ENCODE measurements at regions of chr9 and their contacts with region 1.

Region 1: GRCh38 chr9:95592931-95593330 is 76.2 kb upstream of the PTCH1 start:
- DNase-seq: no peak
- H3K4me3 ChIP-seq: no peak overlapping the region
- H3K27ac ChIP-seq: no peak overlapping the region
- H3K27me3 ChIP-seq: peaks cover 26% of the 10 kb centered on the region
- CTCF ChIP-seq: no peak

Region 2: GRCh38 chr9:95206143-95206542 is 386.8 kb before region 1 on chr9:
- CTCF ChIA-PET with region 1: no interaction called
- POLR2A ChIA-PET with region 1: interaction called, 10 read pairs
- DNase-seq: no peak
- H3K4me3 ChIP-seq: no peak overlapping the region
- H3K27ac ChIP-seq: no peak overlapping the region
- H3K27me3 ChIP-seq: no peaks in the 10 kb centered on the region
- CTCF ChIP-seq: no peak

Region 3: DNA sequence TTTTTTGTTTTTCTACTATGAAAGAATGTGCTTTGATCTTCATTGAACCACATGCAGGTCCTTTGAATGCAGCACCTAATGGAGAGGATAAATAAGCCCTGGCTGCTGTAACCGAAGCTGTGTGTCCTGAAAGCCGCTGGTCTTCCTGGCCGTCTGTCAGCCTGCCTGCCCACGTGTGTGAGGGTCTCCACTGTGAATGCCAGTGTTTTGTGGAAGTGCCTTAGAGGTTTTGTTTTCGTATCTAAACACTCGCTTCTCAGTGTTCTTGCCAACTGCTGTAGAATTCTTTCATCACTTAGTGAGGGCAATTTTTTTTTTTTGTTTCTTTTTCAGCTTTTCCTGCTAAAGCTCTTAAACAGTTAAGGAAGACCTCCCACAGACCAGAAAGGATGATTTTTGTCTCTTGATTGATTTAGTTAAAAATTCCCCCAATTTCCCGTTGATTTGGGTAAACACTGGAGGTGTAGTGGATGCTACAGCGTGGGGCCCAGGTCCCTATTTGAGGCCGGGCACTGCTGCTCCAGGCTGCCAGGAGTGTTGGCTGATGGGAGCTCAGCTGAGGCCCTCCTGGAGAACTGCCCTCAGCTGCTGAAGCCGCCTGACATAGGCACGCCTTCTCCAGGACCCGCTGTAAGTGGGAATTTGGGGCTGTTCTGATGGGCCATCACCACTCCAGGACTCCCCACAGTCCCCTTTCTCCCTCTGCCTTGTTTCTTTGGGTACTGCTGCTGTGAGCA is 46.9 kb before region 1 on chr9:
- CTCF ChIA-PET with region 1: no interaction called
- POLR2A ChIA-PET with region 1: no interaction called
- DNase-seq: no peak
- H3K4me3 ChIP-seq: no peak overlapping the region
- H3K27ac ChIP-seq: no peak overlapping the region
- H3K27me3 ChIP-seq: peaks cover 15% of the 10 kb centered on the region
- CTCF ChIP-seq: no peak

Region 4: DNA sequence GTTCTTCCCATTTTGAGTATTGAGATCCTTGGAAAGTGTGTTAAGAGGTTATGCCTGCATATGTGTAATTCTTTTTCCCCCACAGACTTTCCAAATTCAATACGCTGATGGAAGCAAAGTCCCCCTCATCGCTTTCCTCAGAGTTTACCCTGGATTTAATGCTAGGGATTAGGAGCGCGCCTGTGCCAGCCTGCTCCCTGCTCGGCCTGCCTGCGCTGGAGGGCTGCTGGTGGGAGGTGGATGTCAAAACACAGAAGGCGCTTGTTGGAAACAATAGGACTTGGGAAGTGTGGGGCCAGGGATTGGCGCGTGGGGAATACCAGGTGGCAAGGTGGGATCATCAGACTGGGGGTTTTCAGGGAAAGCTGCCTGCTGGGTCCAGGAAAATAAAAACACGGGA is 36.4 kb before region 1 on chr9:
- CTCF ChIA-PET with region 1: no interaction called
- POLR2A ChIA-PET with region 1: no interaction called
- DNase-seq: no peak
- H3K4me3 ChIP-seq: no peak overlapping the region
- H3K27ac ChIP-seq: no peak overlapping the region
- H3K27me3 ChIP-seq: peaks cover 13% of the 10 kb centered on the region
- CTCF ChIP-seq: no peak

Measured in AG04450 (cell line).